CD4-positive, alpha-beta T cell (primary cell): ENCODE measurements at regions of chr11 and their contacts with region 1.

Region 1: GRCh38 chr11:207208-207862 is at the starts of genes BET1L and RIC8A:
- DNase-seq: peak; percentile 94 to 100 (median 97)
- ATAC-seq: peak; percentile 76
- H3K4me3 ChIP-seq: peak within 1 kb of the TSS; percentile 69
- H3K4me3 Mint-ChIP-seq: peak within 1 kb of the TSS; percentile 95
- H3K27ac ChIP-seq: peak within 1 kb of the TSS; percentile 93 to 94
- H3K27ac Mint-ChIP-seq: peak within 1 kb of the TSS; percentile 99
- H3K4me1 ChIP-seq: peaks cover 78% of the 10 kb centered on the region
- H3K4me1 Mint-ChIP-seq: peaks cover 61% of the 10 kb centered on the region
- H3K27me3 ChIP-seq: no peaks in the 10 kb centered on the region
- H3K27me3 Mint-ChIP-seq: no peaks in the 10 kb centered on the region
- CTCF ChIP-seq: no peak
- total RNA-seq, gene BET1L: 69.5 to 72.7 TPM
- total RNA-seq, gene RIC8A: 99.6 to 104 TPM

Region 2: GRCh38 chr11:196786-197719 is 10.3 kb before region 1 on chr11:
- CTCF ChIA-PET with region 1: no interaction called
- POLR2A ChIA-PET with region 1: interaction called, 11 read pairs
- intact Hi-C with region 1: no loop called
- DNase-seq: peak in 2 of 14 experiments; percentile 22 to 24
- ATAC-seq: no peak
- H3K4me3 ChIP-seq: no peak overlapping the region
- H3K4me3 Mint-ChIP-seq: no peak overlapping the region
- H3K27ac ChIP-seq: no peak overlapping the region
- H3K27ac Mint-ChIP-seq: no peak overlapping the region
- H3K4me1 ChIP-seq: peaks cover 13% of the 10 kb centered on the region
- H3K4me1 Mint-ChIP-seq: peaks cover 11% of the 10 kb centered on the region
- H3K27me3 ChIP-seq: no peaks in the 10 kb centered on the region
- H3K27me3 Mint-ChIP-seq: no peaks in the 10 kb centered on the region
- CTCF ChIP-seq: no peak

Region 3: GRCh38 chr11:269146-269890 is 62.0 kb after region 1 on chr11:
- CTCF ChIA-PET with region 1: no interaction called
- POLR2A ChIA-PET with region 1: interaction called, 55 read pairs
- intact Hi-C with region 1: loop called in 1 of 2 experiments (anchors 5 kb)
- DNase-seq: peak in 12 of 14 experiments; percentile 29 to 89 (median 51)
- ATAC-seq: peak; percentile 76
- H3K4me3 ChIP-seq: peak overlapping the region; percentile 56
- H3K4me3 Mint-ChIP-seq: peak overlapping the region; percentile 91
- H3K27ac ChIP-seq: peak overlapping the region; percentile 74 to 84
- H3K27ac Mint-ChIP-seq: peak overlapping the region; percentile 94
- H3K4me1 ChIP-seq: peaks cover 34% of the 10 kb centered on the region
- H3K4me1 Mint-ChIP-seq: peaks cover 33% of the 10 kb centered on the region
- H3K27me3 ChIP-seq: no peaks in the 10 kb centered on the region
- H3K27me3 Mint-ChIP-seq: no peaks in the 10 kb centered on the region
- CTCF ChIP-seq: no peak

Region 4: GRCh38 chr11:304915-305843 is 97.8 kb after region 1 on chr11:
- CTCF ChIA-PET with region 1: interaction called, 3 read pairs
- POLR2A ChIA-PET with region 1: interaction called, 17 read pairs
- intact Hi-C with region 1: loop called in 1 of 2 experiments (anchors 5 kb)
- DNase-seq: peak in 9 of 14 experiments; percentile 52 to 87 (median 63)
- ATAC-seq: peak; percentile 37
- H3K4me3 ChIP-seq: no peak overlapping the region
- H3K4me3 Mint-ChIP-seq: peak overlapping the region; percentile 85
- H3K27ac ChIP-seq: no peak overlapping the region
- H3K27ac Mint-ChIP-seq: peak overlapping the region; percentile 96
- H3K4me1 ChIP-seq: peaks cover 50% of the 10 kb centered on the region
- H3K4me1 Mint-ChIP-seq: peaks cover 39% of the 10 kb centered on the region
- H3K27me3 ChIP-seq: no peaks in the 10 kb centered on the region
- H3K27me3 Mint-ChIP-seq: no peaks in the 10 kb centered on the region
- CTCF ChIP-seq: peak; percentile 80

Region 5: DNA sequence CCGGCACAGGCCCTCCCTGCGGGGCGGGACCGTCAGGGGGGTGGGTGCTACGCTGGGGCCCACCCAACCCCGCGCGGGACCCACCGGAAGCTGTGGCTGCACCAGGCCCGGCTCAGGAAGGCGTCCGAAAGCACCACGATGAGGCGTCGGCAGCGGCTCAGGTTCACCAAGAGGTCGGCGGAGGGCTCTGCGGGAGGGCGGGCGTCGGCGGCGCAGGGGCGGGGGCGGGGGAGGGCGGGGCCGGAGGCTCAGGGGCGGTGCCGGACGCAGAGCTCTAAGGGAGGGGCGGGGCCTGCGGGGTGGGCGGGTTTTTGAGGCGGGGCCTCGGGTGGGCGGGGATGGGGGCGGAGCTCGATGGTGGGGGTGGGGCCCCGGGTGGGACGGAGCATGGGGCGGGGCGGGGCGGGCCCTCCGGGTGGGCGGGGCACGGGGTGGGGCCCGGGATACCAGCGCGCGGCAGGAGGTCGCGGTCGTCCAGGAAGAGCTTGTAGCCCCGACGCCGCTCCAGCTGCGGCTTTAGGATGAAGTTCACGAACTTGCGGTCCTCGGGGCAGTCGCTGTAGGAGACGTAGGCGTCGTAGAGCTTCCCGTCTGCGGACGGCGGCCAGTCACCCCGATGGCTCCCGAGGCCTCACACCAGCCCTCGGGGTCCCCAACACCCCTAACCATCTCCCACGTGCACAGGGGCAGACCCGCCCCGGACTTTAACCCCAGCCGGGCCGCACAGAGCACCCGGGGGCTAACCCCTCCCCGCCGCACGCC is 199.8 kb after region 1 on chr11:
- CTCF ChIA-PET with region 1: no interaction called
- POLR2A ChIA-PET with region 1: interaction called, 26 read pairs
- intact Hi-C with region 1: loop called in 1 of 2 experiments (anchors 1 kb)
- DNase-seq: peak; percentile 84 to 97 (median 91)
- ATAC-seq: peak; percentile 84
- H3K4me3 ChIP-seq: peak overlapping the region; percentile 39
- H3K4me3 Mint-ChIP-seq: no peak overlapping the region
- H3K27ac ChIP-seq: peak overlapping the region; percentile 64 to 67
- H3K27ac Mint-ChIP-seq: peak overlapping the region; percentile 76
- H3K4me1 ChIP-seq: peaks cover 46% of the 10 kb centered on the region
- H3K4me1 Mint-ChIP-seq: peaks cover 8% of the 10 kb centered on the region
- H3K27me3 ChIP-seq: no peaks in the 10 kb centered on the region
- H3K27me3 Mint-ChIP-seq: no peaks in the 10 kb centered on the region
- CTCF ChIP-seq: no peak

Region 6: DNA sequence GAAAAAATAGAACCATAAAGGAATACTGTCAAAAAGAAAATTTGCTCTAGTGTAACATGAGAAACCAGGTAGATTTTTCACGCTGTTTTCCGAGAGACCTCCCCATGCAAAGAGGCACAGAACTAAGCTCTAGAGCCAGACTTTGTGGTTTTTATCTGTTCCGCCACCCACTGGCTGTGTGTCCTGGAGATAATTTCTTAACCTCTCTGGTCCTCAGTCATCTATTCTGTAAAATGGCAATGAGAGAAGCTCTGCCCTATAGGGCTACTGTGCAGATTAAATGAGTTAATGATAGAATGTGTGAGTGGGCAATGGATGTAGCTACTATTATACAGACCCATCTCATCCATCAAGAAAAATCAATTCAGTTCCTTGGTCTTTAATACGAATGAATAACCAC is 216.9 kb after region 1 on chr11:
- CTCF ChIA-PET with region 1: no interaction called
- POLR2A ChIA-PET with region 1: no interaction called
- intact Hi-C with region 1: no loop called
- DNase-seq: no peak
- ATAC-seq: no peak
- H3K4me3 ChIP-seq: no peak overlapping the region
- H3K4me3 Mint-ChIP-seq: no peak overlapping the region
- H3K27ac ChIP-seq: no peak overlapping the region
- H3K27ac Mint-ChIP-seq: no peak overlapping the region
- H3K4me1 ChIP-seq: peaks cover 8% of the 10 kb centered on the region
- H3K4me1 Mint-ChIP-seq: no peaks in the 10 kb centered on the region
- H3K27me3 ChIP-seq: no peaks in the 10 kb centered on the region
- H3K27me3 Mint-ChIP-seq: no peaks in the 10 kb centered on the region
- CTCF ChIP-seq: no peak

Region 7: DNA sequence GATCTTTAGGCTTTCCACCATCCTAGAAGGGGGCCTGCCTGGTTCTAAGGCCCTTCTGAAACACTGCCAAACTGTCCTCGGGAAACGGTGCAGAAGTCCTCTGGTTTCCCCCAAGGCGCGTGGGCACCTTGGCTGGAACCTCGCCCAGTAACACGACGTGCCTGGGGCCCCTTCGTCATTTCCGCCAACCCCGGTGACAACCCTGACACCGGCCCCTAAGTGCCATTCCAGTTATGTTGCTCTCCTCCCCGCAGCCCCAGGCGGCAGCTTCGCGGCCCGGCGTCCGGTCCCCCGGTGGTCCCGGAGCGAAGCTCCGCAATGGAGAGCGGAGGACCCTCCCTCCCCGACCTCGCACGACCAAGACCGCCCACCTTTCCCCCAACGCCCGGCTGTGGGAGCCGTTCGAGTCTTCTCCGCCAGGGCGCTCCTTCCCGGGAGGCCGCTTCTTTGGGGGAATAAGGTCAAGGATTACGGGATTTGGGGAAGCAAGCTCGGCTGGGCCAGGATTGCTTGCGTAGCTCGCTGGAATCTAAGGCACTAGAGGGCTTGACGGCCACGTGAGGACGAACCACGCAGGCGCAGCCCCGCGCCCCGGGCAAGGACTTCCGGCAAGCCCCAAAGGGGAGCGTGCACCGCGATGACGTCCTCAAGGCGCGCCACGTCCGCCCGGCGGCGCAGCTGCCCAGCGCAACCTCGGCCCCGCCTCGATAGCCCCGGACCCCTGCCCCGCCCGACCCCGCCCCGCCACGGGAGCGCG is 299.1 kb after region 1 on chr11:
- CTCF ChIA-PET with region 1: no interaction called
- POLR2A ChIA-PET with region 1: interaction called, 50 read pairs
- intact Hi-C with region 1: loop called in 1 of 2 experiments (anchors 5 kb)
- DNase-seq: peak; percentile 93 to 99 (median 97)
- ATAC-seq: peak; percentile 67
- H3K4me3 ChIP-seq: peak overlapping the region; percentile 78
- H3K4me3 Mint-ChIP-seq: peak overlapping the region; percentile 97
- H3K27ac ChIP-seq: peak overlapping the region; percentile 100
- H3K27ac Mint-ChIP-seq: peak overlapping the region; percentile 100
- H3K4me1 ChIP-seq: peaks cover 53% of the 10 kb centered on the region
- H3K4me1 Mint-ChIP-seq: peaks cover 24% of the 10 kb centered on the region
- H3K27me3 ChIP-seq: no peaks in the 10 kb centered on the region
- H3K27me3 Mint-ChIP-seq: peaks cover 4% of the 10 kb centered on the region
- CTCF ChIP-seq: no peak

Region 8: GRCh38 chr11:695538-696248 is 488.4 kb after region 1 on chr11 and contains the start of gene TMEM80:
- CTCF ChIA-PET with region 1: no interaction called
- POLR2A ChIA-PET with region 1: interaction called, 11 read pairs
- intact Hi-C with region 1: no loop called
- DNase-seq: peak; percentile 94 to 99 (median 97)
- ATAC-seq: peak; percentile 59
- H3K4me3 ChIP-seq: peak within 1 kb of the TSS; percentile 94
- H3K4me3 Mint-ChIP-seq: peak within 1 kb of the TSS; percentile 94
- H3K27ac ChIP-seq: peak within 1 kb of the TSS; percentile 99 to 100
- H3K27ac Mint-ChIP-seq: peak within 1 kb of the TSS; percentile 95
- H3K4me1 ChIP-seq: peaks cover 70% of the 10 kb centered on the region
- H3K4me1 Mint-ChIP-seq: peaks cover 51% of the 10 kb centered on the region
- H3K27me3 ChIP-seq: no peaks in the 10 kb centered on the region
- H3K27me3 Mint-ChIP-seq: no peaks in the 10 kb centered on the region
- CTCF ChIP-seq: no peak
- total RNA-seq, gene TMEM80: 21.0 to 22.0 TPM

Region 9: DNA sequence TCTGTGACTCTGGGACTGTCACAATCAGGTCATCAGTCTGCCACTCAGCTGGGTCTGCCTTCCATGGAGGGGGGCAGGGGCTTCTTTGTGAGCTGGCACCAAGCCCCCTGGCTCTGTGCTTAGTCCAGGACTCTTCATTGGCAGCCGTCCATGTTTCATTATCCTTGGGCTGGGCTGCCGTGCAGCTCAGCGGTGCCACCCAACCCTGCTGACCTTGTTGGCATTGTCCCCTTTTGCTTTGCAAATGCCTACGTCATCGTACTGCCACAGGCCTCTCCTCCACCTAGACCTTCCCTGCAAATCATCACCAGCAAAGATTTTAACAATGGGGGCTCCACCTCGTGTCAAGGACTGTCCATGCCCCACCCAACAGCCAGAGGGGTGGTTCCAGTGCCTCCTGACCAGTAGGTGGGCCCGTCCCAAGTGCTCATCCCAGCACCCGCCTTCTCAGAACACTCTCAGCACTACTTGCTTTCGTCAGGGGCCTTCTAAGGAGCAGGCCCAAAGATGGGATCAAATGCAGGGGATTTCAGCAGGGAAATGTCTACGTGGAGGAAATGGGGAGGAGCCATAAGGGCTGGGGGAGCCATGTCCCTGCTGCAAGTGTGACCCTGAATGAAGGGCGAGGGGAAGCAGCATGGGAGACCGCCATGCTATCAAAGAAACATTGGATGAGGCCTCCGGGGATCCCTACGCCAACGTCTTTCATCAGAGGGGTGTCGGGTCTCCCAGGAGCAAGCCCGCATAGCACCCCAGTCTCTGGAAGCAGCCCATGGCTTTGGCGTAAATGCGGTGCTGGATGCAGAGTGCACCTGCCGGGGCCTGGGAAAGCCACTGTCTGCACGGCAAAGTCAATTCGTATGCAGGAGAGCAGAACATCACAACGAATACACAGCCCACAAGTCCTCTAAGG is 1507.9 kb after region 1 on chr11:
- CTCF ChIA-PET with region 1: no interaction called
- POLR2A ChIA-PET with region 1: no interaction called
- intact Hi-C with region 1: no loop called
- DNase-seq: no peak
- ATAC-seq: no peak
- H3K4me3 ChIP-seq: no peak overlapping the region
- H3K4me3 Mint-ChIP-seq: no peak overlapping the region
- H3K27ac ChIP-seq: no peak overlapping the region
- H3K27ac Mint-ChIP-seq: no peak overlapping the region
- H3K4me1 ChIP-seq: no peaks in the 10 kb centered on the region
- H3K4me1 Mint-ChIP-seq: no peaks in the 10 kb centered on the region
- H3K27me3 ChIP-seq: no peaks in the 10 kb centered on the region
- H3K27me3 Mint-ChIP-seq: peaks cover 4% of the 10 kb centered on the region
- CTCF ChIP-seq: no peak